Pancreas (tissue), 10 donors: ENCODE measurements at regions of chr1 and their contacts with region 1.

Region 1: GRCh38 chr1:182595641-182596240 is 6.7 kb upstream of the RNASEL start:
- DNase-seq: peak; percentile 53 to 83 (median 70)
- ATAC-seq: peak; percentile 77 to 95 (median 88)
- H3K4me3 ChIP-seq: no peak overlapping the region
- H3K27ac ChIP-seq: no peak overlapping the region
- H3K4me1 ChIP-seq: no peaks in the 10 kb centered on the region
- H3K27me3 ChIP-seq: no peaks in the 10 kb centered on the region
- CTCF ChIP-seq: peak; percentile 74 to 81 (median 77)

Region 2: GRCh38 chr1:182781841-182782586 is 186.3 kb after region 1 on chr1:
- intact Hi-C with region 1: loop called in 2 of 3 experiments (anchors 2 to 5 kb)
- DNase-seq: peak; percentile 46 to 76 (median 55)
- ATAC-seq: peak; percentile 66 to 88 (median 85)
- H3K4me3 ChIP-seq: no peak overlapping the region
- H3K27ac ChIP-seq: no peak overlapping the region
- H3K4me1 ChIP-seq: peaks cover 0 to 4% (median 0%) of the 10 kb centered on the region in 3 donors
- H3K27me3 ChIP-seq: no peaks in the 10 kb centered on the region
- CTCF ChIP-seq: peak; percentile 34 to 58 (median 45)

Region 3: GRCh38 chr1:182789138-182790076 is 193.7 kb after region 1 on chr1 and contains the start of gene NPL:
- intact Hi-C with region 1: loop called (anchors 2 to 10 kb)
- DNase-seq: peak; percentile 75 to 94 (median 82)
- ATAC-seq: peak; percentile 95 to 99 (median 98)
- H3K4me3 ChIP-seq: peak within 1 kb of the TSS; percentile 26 to 63 (median 49)
- H3K27ac ChIP-seq: peak within 1 kb of the TSS in 1 of 4 donors; percentile 20
- H3K4me1 ChIP-seq: no peaks in the 10 kb centered on the region
- H3K27me3 ChIP-seq: no peaks in the 10 kb centered on the region
- CTCF ChIP-seq: no peak
- total RNA-seq, gene NPL: 1.2 to 9.7 (median 3.3) TPM